ENCODE measurements at regions of chr11 and their contacts with region 1.

Region 1: DNA sequence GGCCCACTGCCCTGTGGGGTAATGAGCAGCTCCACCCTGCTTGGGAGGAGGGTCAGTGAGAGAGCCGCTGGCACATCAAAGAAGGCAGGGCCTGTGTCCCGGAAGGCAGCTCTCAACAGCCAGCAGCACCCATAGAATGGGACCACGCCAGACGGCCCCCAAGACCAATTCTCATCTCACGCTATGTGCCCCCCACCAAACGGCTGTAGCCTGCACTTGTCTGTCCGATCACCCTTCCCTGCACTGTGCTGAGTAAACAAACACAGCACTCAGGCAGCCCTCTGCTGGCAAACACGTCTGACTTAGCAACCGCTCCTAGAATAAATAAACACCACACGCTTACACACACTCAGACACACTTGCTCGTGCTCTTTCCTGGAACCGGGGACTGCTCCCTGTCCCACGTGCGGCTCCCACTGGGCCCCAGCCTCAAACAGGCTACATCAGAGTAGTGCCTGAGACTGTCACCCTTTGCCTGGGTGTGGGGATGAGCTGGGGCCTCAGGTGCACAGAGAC is 53.2 kb upstream of the CDON start:
- DNase-seq: peak; percentile 81
- ATAC-seq: peak; percentile 75

Region 2: DNA sequence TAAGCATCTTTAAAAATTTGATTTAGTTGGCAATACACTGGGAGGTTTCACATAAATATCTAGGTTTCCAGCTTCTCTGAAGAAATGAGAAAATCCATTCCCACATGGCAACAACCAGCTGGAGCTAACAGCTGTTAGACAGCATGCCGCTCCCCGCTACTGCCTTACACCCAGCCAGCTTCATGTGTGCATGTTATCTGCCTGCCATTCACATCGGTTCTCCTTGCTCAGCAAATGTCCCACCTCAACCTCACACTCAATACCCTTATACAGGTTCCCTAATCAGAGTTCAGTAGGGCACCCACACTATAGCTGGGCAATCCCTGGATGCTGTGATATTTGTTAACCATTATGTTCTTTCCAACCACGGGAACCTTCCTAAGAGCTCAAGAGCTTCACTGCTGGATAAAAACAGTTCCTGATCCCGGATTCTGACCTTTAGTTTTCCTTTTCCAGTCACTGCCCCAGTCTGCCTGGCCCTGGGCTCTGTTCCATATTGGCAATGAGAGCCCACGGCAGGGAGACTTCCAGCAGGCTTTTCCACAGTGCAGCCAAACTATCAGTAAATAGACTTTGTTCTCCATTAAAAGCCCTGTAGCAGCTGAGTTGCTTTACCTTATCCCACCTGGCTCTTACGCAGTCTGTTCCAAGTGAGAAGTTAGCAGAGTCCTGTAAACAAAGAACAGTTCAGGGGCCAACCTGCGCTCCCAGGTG is 86.9 kb after region 1 on chr11:
- intact Hi-C with region 1: loop called (anchors 10 kb)
- DNase-seq: no peak
- ATAC-seq: peak; percentile 67